RWPE1 (cell line): ENCODE measurements at regions of chr12 and their contacts with region 1.

Region 1: GRCh38 chr12:57726151-57726883 is 12.2 kb downstream of the AGAP2 start:
- DNase-seq: peak; percentile 89
- H3K27ac ChIP-seq: peak overlapping the region; percentile 90
- CTCF ChIP-seq: peak; percentile 89

Region 2: DNA sequence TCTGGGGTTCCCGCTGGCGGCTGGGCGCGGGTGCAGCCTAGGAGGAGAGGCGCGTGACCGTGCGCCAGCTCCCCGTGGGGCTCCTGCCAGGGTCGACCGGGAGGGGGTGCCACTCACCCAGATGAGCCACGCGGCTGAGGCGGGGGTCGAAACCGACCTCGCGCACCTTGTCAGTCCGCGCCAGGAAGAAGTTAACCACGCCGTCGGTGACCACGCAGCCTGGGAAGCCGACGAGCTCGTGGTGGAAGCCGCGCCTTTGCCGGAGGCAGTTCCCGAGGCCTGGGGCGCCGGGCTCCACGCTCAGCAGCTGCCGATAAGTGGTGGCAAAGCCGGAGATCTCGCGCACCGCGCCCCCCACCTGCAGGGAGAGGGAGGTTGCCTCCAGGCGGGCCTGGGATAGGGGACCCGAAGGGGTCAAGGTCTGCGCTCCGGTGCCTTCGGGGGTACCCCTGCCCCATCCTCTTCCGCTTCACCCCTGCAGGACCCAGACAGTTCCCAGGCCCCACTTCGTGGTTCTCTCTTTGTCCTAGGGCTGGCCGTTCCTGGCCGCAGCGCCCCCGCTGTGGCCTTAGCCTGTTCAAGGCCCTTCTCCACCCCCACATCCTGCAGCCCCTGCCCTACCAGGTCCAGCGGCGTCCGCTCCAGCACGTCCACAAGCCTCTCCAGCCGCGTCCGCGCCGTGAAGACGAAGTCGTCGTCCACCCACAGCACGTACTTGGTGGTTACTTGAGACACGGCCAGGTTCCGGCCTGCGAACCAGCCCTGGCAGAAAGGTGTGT is 98.6 kb before region 1 on chr12:
- CTCF ChIA-PET with region 1: no interaction called
- POLR2A ChIA-PET with region 1: no interaction called
- DNase-seq: no peak
- H3K27ac ChIP-seq: no peak overlapping the region
- CTCF ChIP-seq: no peak

Region 3: DNA sequence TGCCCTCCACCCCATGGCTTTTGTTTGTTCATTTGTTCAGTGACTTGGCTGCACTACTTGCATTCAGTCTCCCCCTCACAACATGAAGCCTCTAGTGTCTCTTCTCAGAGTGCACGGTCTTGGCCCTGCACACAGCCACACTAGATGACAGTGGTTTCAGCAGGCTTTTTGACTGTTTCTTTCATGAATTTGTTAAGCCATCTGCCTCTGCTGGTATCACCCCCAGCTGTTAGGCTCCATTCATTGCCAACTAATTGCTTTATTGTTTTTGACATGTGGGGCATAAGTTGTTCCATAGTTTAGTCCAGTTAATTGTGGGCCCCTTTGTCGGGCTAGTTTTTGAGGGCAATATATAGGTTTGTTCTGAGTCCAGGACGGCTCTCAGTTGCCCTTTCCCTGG is 13.6 kb before region 1 on chr12:
- CTCF ChIA-PET with region 1: interaction called, 10 read pairs
- POLR2A ChIA-PET with region 1: interaction called, 6 read pairs
- DNase-seq: no peak
- H3K27ac ChIP-seq: no peak overlapping the region
- CTCF ChIP-seq: no peak

Region 4: GRCh38 chr12:57744777-57745484 is 18.6 kb after region 1 on chr12 and contains the start of gene TSPAN31:
- CTCF ChIA-PET with region 1: interaction called, 14 read pairs
- POLR2A ChIA-PET with region 1: no interaction called
- DNase-seq: peak; percentile 97
- H3K27ac ChIP-seq: peak within 1 kb of the TSS; percentile 92
- CTCF ChIP-seq: no peak

Region 5: DNA sequence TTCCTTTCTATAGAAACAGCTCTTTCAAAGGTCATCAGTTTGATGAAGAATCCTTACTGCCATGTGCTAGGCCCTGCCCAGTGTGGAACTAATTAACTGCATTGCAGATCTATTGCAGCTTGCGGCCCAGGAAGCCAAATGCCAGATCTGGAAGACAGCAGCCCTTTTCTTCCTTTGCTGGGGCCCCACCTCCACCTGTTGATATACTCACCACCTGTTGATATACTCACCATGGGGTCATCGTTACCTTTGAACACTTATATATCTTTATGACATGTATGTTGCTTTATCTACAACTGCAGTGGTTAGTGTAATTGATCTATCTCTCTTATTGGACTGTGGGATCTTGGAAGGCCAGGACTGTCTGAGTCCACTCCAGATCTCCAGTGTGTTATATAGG is 507.6 kb after region 1 on chr12:
- CTCF ChIA-PET with region 1: no interaction called
- POLR2A ChIA-PET with region 1: no interaction called
- DNase-seq: no peak
- H3K27ac ChIP-seq: no peak overlapping the region
- CTCF ChIP-seq: no peak